T-cell (primary cell): ENCODE measurements at regions of chr4 and their contacts with region 1.

Region 1: DNA sequence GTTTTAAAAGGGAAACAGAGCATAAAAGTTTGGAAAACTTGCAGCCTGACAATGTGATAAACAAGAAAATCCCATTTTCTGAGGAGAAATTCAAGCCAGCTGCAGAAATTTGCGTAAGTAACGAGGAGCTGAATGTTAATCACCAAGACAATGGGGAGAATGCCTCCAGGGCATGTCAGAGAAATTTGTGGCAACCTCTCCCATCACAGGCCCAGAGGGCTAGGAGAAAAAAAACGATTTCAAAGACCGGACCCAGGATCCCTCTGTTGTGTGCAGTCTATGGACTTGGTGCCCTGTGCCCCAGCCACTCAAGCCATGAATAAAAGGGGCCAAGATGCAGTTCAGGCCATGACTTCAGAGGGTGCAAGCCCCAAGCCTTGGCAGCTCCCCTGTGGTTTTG is 355.4 kb upstream of the NDST3 start:
- DNase-seq: no peak
- ATAC-seq: no peak
- H3K4me3 ChIP-seq: no peak overlapping the region
- H3K4me3 Mint-ChIP-seq: no peak overlapping the region
- H3K27ac ChIP-seq: no peak overlapping the region
- H3K27ac Mint-ChIP-seq: no peak overlapping the region
- H3K4me1 ChIP-seq: no peaks in the 10 kb centered on the region
- H3K4me1 Mint-ChIP-seq: no peaks in the 10 kb centered on the region
- H3K27me3 ChIP-seq: no peaks in the 10 kb centered on the region
- H3K27me3 Mint-ChIP-seq: no peaks in the 10 kb centered on the region

Region 2: DNA sequence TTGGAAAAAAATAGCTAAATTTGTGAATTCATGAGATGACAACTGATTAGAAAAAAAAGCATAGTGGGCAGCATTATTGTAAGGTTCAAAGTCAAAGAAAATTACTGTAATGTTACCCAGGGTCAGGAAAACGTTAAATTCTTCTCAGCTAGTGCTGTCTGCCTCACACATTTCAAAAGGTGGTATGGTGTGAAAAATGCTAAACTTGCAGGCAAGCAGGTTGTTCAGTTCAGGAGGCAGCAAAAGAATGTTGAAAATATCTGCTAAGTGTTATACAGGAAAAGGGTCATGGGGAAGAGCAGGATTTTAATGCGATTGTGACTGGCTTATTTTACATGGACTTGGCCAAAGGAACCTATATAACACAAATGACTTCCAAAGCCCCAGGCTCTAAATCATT is 122.9 kb after region 1 on chr4:
- CTCF ChIA-PET with region 1: no interaction called
- POLR2A ChIA-PET with region 1: interaction called in 1 of 2 experiments, 13 read pairs
- DNase-seq: no peak
- ATAC-seq: no peak
- H3K4me3 ChIP-seq: no peak overlapping the region
- H3K4me3 Mint-ChIP-seq: no peak overlapping the region
- H3K27ac ChIP-seq: no peak overlapping the region
- H3K27ac Mint-ChIP-seq: no peak overlapping the region
- H3K4me1 ChIP-seq: no peaks in the 10 kb centered on the region
- H3K4me1 Mint-ChIP-seq: no peaks in the 10 kb centered on the region
- H3K27me3 ChIP-seq: no peaks in the 10 kb centered on the region
- H3K27me3 Mint-ChIP-seq: no peaks in the 10 kb centered on the region